ENCODE measurements at regions of chr5 and their contacts with region 1.

Region 1: DNA sequence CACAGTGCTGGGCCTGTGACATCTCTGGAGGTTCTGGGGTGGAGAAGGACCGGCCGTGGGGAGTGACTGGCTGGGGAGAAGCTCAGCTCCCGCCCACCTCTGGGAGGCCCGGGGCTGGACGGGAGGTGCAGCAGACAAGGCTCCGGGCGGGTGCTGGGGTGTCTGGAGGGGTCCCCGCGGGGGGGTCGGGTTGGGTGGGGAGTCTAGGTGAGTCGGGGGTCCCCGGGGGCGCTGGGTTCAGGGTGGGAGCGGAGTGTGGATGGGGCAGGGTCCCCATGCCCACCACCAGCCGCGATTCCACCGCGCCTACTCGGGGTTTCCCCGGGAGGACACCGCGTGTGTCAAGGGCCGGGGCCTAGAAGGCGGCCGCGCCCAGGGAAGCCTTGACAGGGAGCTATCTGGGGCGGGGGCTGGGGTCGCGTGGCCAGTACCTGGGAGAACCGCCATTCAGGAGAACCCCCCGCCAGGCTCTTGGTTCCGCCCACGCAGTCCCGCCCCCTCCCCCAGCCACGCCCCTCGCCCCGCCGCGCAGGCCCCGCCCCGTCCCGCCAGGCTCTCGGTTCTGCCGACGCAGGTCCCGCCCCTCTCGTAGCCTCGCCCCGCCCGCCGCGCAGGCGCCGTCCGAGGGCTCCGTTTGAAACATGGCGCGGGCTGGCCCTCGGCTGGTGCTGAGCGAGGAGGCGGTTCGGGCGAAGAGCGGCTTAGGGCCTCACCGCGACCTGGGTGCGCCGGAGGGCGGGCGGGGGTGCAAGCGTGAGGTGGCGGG is at the start of gene CEP72:
- DNase-seq: peak; percentile 80 to 96 (median 90)
- ATAC-seq: peak; percentile 92 to 95
- H3K4me3 Mint-ChIP-seq: peak within 1 kb of the TSS; percentile 81 to 98 (median 94)
- H3K27ac Mint-ChIP-seq: peak within 1 kb of the TSS; percentile 37 to 94 (median 87)
- H3K4me1 Mint-ChIP-seq: peaks cover 37 to 67% (median 56%) of the 10 kb centered on the region in 4 donors
- H3K27me3 Mint-ChIP-seq: peaks cover 0 to 17% (median 10%) of the 10 kb centered on the region in 5 donors
- polyA plus RNA-seq, gene CEP72: 2.8 to 6.4 (median 4.1) TPM

Region 2: DNA sequence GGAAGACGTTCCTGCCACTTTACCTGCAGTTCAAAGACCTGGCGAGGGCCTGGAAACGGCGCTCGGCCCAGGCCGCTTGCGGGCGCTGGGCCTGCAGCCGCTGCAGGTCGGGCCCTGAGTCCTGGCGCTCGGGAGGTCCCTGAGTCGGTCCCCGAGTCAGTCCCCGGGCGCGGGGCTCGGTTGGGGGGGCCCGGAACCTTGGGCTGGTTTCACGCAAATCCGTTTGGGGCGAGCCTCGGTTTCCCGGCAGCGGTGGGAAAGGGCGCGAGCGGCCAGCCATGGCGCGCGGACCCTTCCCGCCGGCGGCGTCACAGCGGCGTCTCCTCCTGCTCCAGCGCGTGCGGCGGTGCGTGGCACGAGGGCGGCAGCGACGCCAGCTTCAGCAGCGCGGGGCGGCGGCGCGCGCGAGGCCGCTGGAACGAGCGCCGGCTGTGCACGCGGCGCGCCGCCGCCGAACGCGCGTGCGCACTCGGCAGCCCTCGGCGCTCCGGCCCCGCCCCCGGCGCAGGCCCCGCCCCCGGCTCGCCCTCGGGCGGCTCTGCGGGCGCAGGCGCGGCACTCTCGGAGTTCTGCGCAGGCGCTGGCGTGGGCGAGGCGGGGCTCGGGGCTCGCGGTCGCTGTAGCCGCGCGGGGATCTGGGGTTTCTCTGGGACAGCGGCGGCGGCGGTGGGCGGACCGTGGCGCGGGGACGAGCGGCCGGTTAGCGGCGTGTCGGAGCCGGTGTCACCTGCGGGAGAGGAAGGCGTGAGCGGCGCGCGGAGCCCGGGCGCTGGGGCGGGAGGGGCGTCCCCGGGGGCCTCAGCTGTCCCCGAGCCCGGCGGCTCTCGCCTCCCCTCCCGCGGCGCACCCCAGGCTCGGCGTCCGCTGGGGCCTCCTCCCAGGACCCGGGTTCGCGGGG is 139.0 kb before region 1 on chr5:
- POLR2A ChIA-PET with region 1: interaction called, 15 read pairs
- DNase-seq: peak; percentile 80 to 98 (median 90)
- ATAC-seq: peak; percentile 82 to 84
- H3K4me3 Mint-ChIP-seq: peak overlapping the region; percentile 75 to 89 (median 84)
- H3K27ac Mint-ChIP-seq: peak overlapping the region in 6 of 10 donors; percentile 61 to 92 (median 82)
- H3K4me1 Mint-ChIP-seq: peaks cover 13 to 31% (median 27%) of the 10 kb centered on the region in 4 donors
- H3K27me3 Mint-ChIP-seq: peaks cover 0 to 37% (median 8%) of the 10 kb centered on the region in 5 donors

Region 3: GRCh38 chr5:565782-566440 is 46.0 kb before region 1 on chr5:
- POLR2A ChIA-PET with region 1: no interaction called
- DNase-seq: no peak
- ATAC-seq: no peak
- H3K4me3 Mint-ChIP-seq: no peak overlapping the region
- H3K27ac Mint-ChIP-seq: no peak overlapping the region
- H3K4me1 Mint-ChIP-seq: peaks cover 0 to 2% (median 0%) of the 10 kb centered on the region in 4 donors
- H3K27me3 Mint-ChIP-seq: peaks cover 5 to 40% (median 23%) of the 10 kb centered on the region in 5 donors

Measured in naive thymus-derived CD8-positive, alpha-beta T cell (primary cell).